Activated CD4-positive, alpha-beta memory T cell treated with anti-CD3 and anti-CD28 coated beads for 36 hours (primary cell): ENCODE measurements at regions of chr1 and their contacts with region 1.

Region 1: GRCh38 chr1:168504064-168504837 is 39.5 kb downstream of the XCL2 start:
- DNase-seq: peak; percentile 51
- H3K4me3 Mint-ChIP-seq: no peak overlapping the region
- H3K27ac Mint-ChIP-seq: no peak overlapping the region
- H3K4me1 Mint-ChIP-seq: peaks cover 12% of the 10 kb centered on the region
- H3K27me3 Mint-ChIP-seq: no peaks in the 10 kb centered on the region

Region 2: GRCh38 chr1:168472223-168472622 is 32.0 kb before region 1 on chr1:
- CTCF ChIA-PET with region 1: interaction called, 3 read pairs
- POLR2A ChIA-PET with region 1: no interaction called
- intact Hi-C with region 1: loop called (anchors 2 kb)
- DNase-seq: no peak
- H3K4me3 Mint-ChIP-seq: no peak overlapping the region
- H3K27ac Mint-ChIP-seq: no peak overlapping the region
- H3K4me1 Mint-ChIP-seq: peaks cover 45% of the 10 kb centered on the region
- H3K27me3 Mint-ChIP-seq: no peaks in the 10 kb centered on the region

Region 3: DNA sequence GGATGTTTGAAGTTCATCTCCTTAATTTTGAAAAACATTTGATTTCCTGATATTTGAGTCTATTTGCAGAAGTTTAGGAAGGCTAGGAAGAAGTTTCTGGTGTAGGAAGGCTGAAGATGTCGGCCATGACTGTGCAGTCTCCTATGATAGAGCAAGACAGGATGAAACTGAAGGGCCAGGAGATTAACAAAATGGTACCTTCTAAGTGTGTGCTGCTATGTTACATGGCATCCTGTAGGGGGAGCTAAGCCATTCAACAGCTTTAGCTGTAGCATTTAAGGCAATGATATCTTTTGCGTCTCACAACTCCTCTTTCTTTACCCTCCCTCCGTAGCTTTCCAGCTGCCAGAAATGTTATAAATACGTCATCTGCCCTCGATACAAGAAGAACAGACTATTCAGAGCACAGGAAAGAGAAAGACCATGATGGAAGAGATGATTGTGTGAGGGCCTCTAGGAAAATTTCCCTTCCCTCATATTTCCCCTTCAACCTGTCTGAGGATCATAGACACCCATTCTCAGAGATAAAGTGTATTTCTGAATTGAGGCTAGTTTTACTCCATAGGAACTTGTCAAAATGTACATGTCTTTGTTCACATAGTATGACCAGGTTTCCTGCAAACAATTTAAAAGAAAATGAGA is 133.2 kb after region 1 on chr1:
- CTCF ChIA-PET with region 1: no interaction called
- POLR2A ChIA-PET with region 1: no interaction called
- intact Hi-C with region 1: no loop called
- DNase-seq: no peak
- H3K4me3 Mint-ChIP-seq: no peak overlapping the region
- H3K27ac Mint-ChIP-seq: no peak overlapping the region
- H3K4me1 Mint-ChIP-seq: no peaks in the 10 kb centered on the region
- H3K27me3 Mint-ChIP-seq: peaks cover 10% of the 10 kb centered on the region